ENCODE measurements at regions of chr11 and their contacts with region 1.

Region 1: DNA sequence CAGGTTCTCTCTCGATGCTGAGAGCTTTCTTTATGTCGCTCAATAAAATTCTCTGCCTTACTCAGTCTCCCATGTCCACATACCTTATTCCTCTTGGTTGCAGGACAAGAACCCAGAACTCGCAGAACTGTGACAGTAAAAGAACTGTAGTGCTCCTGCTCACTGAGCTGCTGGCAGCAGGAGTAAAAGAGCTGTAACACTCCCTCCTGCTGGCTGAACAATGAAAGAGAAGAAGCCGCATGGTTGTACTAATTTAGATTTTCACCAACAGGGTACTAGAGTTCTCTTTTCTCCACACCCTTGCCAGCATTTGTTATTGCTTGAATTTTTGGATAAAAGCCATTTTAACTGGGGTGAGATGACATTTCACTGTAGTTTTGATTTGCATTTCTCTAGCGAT is 433.2 kb downstream of the GUCY1A2 start:
- DNase-seq: no peak
- ATAC-seq: peak; percentile 70; the same call in 1 of the 2 replicates
- H3K4me3 ChIP-seq: no peak overlapping the region
- H3K27ac ChIP-seq: no peak overlapping the region
- H3K4me1 ChIP-seq: no peaks in the 10 kb centered on the region
- H3K27me3 ChIP-seq: no peaks in the 10 kb centered on the region
- CTCF ChIP-seq: peak; percentile 28 to 47 (median 31); a peak in 5 of 6 replicates
- POLR2A ChIP-seq: no peak
- RAD21 ChIP-seq: peak; percentile 57

Region 2: DNA sequence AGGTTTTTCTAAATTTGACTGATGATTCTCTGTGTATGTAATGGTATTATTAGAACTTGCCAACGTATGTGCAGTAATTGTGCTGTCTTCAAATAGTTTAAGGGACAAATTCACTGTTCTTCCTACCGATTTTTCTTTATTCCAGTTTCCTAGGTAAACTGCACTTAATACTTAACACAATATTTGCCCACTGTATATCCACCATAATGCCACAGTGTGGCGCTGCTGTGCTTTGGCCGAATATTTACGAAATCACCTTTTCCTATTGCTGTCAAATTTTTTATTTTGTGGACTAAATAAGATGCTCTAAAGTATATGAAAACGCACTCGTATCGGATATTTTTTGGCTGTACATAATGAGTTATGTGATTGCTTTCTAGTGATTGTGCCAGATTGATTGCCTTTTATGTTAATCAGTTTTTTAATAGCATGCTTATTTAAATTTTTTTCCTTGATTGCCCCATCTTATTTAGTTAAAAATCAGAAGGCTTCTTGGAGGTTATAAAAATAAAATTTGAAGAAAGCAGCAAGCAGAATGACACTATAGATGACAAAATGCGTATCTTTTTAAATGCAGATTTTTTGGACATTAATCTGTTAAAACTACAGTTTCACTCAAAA is 497.1 kb before region 1 on chr11:
- CTCF ChIA-PET with region 1: no interaction called
- POLR2A ChIA-PET with region 1: no interaction called
- RAD21 ChIA-PET with region 1: no interaction called
- intact Hi-C with region 1: loop called (anchors 1 kb)
- DNase-seq: peak; percentile 33
- ATAC-seq: peak; percentile 80
- H3K4me3 ChIP-seq: no peak overlapping the region
- H3K27ac ChIP-seq: no peak overlapping the region
- H3K4me1 ChIP-seq: no peaks in the 10 kb centered on the region
- H3K27me3 ChIP-seq: no peaks in the 10 kb centered on the region
- CTCF ChIP-seq: peak; percentile 41 to 95 (median 78); a peak in 5 of 6 replicates
- POLR2A ChIP-seq: no peak
- RAD21 ChIP-seq: peak; percentile 70

Region 3: GRCh38 chr11:106156290-106156937 is 428.6 kb before region 1 on chr11:
- CTCF ChIA-PET with region 1: interaction called, 4 read pairs
- POLR2A ChIA-PET with region 1: no interaction called
- RAD21 ChIA-PET with region 1: no interaction called
- intact Hi-C with region 1: loop called (anchors 2 kb)
- DNase-seq: peak; percentile 26
- ATAC-seq: peak; percentile 73
- H3K4me3 ChIP-seq: no peak overlapping the region
- H3K27ac ChIP-seq: no peak overlapping the region
- H3K4me1 ChIP-seq: no peaks in the 10 kb centered on the region
- H3K27me3 ChIP-seq: no peaks in the 10 kb centered on the region
- CTCF ChIP-seq: peak; percentile 29 to 64 (median 44); a peak in 5 of 6 replicates
- POLR2A ChIP-seq: no peak
- RAD21 ChIP-seq: peak; percentile 61

Region 4: GRCh38 chr11:106322111-106322510 is 262.9 kb before region 1 on chr11:
- CTCF ChIA-PET with region 1: interaction called, 11 read pairs
- POLR2A ChIA-PET with region 1: no interaction called
- RAD21 ChIA-PET with region 1: no interaction called
- intact Hi-C with region 1: no loop called
- DNase-seq: no peak
- ATAC-seq: no peak
- H3K4me3 ChIP-seq: no peak overlapping the region
- H3K27ac ChIP-seq: no peak overlapping the region
- H3K4me1 ChIP-seq: no peaks in the 10 kb centered on the region
- H3K27me3 ChIP-seq: no peaks in the 10 kb centered on the region; the same call in 1 of the 2 replicates
- CTCF ChIP-seq: no peak
- POLR2A ChIP-seq: no peak
- RAD21 ChIP-seq: no peak